ENCODE measurements at regions of chr6 and their contacts with region 1.

Region 1: DNA sequence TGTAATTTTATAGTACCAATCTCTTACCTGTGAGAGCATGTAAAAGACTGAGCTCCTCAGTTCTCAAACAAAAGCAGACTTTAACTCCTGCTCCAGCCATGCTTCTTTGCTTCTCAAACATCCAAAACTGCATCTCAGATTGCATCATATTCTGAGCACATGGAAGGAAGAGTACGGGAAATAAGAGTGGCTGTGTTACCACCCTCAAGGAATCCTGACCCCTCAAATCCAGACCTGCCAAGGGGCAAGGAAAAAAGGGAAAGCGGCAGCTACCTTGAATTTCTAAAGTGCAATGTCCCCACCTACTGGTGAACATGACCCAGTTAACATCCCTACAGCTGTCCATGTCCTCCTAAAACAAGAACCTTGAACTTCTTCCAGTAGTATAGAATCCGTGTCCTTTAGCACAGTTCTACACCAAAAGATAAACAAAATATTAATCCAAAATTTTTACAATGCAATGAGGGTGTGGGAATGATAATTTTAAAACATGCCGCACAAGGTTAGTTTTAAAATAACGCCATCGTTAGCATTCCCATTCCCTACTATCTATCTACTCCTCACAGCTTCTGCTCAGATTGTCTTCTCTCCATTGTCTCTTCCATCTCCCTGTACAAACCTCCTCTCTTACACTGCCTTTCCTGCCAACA is 34.1 kb upstream of the HLA-DQB1 start:
- DNase-seq: peak in 1 of 2 donors; percentile 14
- ATAC-seq: peak; percentile 76

Region 2: GRCh38 chr6:32413427-32414047 is 287.0 kb before region 1 on chr6:
- intact Hi-C with region 1: loop called (anchors 5 to 10 kb)
- DNase-seq: peak; percentile 67 to 84
- ATAC-seq: peak; percentile 83

Region 3: DNA sequence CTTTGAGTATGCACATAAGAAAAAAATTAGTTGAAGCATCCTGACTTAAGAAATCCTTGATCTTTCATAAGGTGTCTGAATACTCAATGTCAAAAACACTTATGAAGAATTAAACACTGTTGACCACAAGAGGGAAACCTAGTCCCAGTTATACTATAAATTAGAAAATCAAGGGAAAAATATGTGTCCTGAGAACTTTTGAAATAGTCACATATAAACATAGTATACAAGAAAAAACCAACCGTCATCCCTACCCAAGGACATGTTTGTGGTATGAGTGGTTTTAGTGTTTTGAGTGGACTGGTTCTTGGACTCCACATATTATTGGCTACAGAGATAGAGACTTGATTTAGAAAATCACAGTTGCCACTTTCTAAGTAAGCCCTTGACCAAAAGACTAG is 268.5 kb before region 1 on chr6:
- intact Hi-C with region 1: loop called in 1 of 2 experiments (anchors 5 kb)
- DNase-seq: no peak
- ATAC-seq: peak; percentile 48

Region 4: GRCh38 chr6:32785781-32786533 is 85.4 kb after region 1 on chr6:
- intact Hi-C with region 1: loop called in 1 of 2 experiments (anchors 10 kb)
- DNase-seq: peak in 1 of 2 donors; percentile 20
- ATAC-seq: peak; percentile 93